Activated naive CD4-positive, alpha-beta T cell treated with anti-CD3 and anti-CD28 coated beads, Interleukin-2, amount 10 ng/mL, durations not matched to agents 7 days and 5 days (primary cell): ENCODE measurements at regions of chr20 and their contacts with region 1.

Region 1: DNA sequence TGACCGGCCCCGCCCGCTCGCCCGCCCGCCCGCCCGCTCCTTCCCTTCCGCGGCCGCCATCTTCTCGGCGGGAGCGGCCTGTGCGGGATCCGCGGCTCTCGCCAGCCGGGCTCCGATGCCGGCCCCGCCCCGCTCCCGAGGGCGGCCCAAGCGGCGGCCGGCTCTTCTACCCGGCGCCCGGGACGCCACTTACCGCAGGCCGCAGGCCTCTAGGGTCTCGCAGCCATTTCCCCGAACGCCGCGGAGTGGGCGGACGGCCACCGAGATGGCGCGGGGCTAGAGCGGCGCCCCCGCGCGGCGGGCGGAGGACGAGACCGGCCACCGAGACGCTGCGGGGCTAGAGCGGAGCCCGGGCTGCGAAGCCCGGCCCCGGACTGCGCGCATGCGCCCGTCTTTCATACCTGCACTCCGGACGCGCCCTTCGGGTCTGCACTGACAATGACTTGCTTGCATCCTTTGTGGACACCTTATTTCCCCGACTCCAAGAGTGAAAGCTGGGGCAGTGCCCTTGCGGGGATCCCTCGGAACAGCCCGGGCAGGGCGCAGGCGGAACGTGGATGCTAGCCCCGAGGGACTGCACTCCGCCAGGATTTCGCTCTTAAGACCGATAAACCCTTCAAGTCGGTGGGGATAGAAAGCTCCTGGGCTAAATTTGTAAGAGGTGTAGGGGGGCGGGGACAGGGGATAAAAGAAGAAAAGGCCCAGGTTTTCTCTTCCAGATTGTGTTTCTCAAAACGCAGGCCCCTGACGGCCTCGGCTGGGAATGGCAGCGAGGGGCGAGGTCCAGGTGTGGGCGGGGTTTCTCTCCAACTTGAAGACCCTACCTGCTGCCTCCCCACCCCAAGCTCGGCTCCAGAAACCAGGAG is at the start of gene DIDO1:
- DNase-seq: peak; percentile 91
- H3K4me3 Mint-ChIP-seq: peak within 1 kb of the TSS; percentile 97
- H3K27ac Mint-ChIP-seq: peak within 1 kb of the TSS; percentile 95
- H3K4me1 Mint-ChIP-seq: peaks cover 78% of the 10 kb centered on the region
- H3K27me3 Mint-ChIP-seq: no peaks in the 10 kb centered on the region

Region 2: DNA sequence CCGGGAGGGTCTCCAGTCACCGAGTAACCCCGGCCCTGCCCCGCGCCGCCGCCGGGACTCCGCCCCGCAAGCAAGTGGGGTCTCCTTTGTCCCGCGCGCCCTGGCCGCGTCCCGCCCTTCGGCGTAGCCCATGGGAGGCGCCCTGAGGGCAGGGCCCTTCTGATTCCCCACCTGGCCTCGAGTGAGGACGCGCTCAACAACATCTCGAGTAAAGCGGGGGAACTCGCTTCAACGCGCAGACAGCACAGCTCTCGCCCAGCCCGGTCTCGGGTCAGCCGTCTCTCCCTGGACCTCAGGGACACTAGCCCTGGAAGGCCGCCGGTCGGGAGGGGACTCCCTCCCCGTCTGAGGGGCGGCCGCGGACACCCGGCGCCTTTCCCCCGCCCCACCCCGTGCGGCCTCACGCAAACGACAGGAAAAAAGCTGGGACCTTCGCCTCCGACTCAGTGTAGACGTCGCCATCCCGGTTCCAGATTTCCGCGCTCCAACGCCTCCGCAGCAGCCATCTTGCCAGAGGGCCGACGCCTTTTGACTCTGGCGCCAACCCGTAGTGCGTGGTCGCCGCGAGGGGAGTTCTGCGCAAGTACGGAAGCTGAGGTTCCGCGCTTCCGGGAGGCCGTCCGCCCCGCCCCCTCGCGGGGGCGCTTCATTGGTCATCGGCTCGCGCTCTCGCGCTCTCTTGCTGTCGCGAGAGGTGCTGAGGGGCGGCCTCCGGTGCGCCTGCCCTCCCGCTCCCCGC is 11.1 kb after region 1 on chr20:
- CTCF ChIA-PET with region 1: interaction called, 11 read pairs
- DNase-seq: peak; percentile 97
- H3K4me3 Mint-ChIP-seq: peak overlapping the region; percentile 99
- H3K27ac Mint-ChIP-seq: peak overlapping the region; percentile 97
- H3K4me1 Mint-ChIP-seq: peaks cover 49% of the 10 kb centered on the region
- H3K27me3 Mint-ChIP-seq: no peaks in the 10 kb centered on the region